AG04449 (cell line): ENCODE measurements at regions of chr4 and their contacts with region 1.

Region 1: GRCh38 chr4:40840985-40841571 is 91.3 kb downstream of the NSUN7 start:
- DNase-seq: peak; percentile 50
- H3K4me3 ChIP-seq: no peak overlapping the region
- CTCF ChIP-seq: peak; percentile 85

Region 2: GRCh38 chr4:40377582-40378550 is 463.2 kb before region 1 on chr4:
- CTCF ChIA-PET with region 1: no interaction called
- POLR2A ChIA-PET with region 1: no interaction called
- DNase-seq: no peak
- H3K4me3 ChIP-seq: no peak overlapping the region
- CTCF ChIP-seq: no peak

Region 3: GRCh38 chr4:40576631-40577480 is 264.2 kb before region 1 on chr4:
- CTCF ChIA-PET with region 1: no interaction called
- POLR2A ChIA-PET with region 1: no interaction called
- DNase-seq: no peak
- H3K4me3 ChIP-seq: no peak overlapping the region
- CTCF ChIP-seq: no peak

Region 4: DNA sequence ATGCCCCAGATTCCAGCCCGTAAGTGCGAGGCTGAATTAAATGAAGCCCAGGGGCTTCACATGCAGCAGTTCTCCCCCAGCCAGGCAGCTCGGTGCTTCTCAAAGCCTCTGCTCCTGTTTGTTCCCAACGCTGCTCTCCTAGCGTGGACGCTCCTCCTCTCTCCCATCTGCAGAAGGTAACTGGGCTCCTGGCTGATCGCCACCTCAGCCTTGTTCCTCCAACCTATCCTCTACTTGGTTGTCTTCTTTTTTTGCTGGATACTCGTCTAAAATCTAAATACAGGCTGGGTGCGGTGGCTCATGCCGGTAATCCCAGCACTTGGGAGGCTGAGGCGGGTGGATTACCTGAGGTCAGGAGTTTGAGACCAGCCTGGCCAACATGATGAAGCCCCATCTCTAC is 21.0 kb before region 1 on chr4:
- CTCF ChIA-PET with region 1: interaction called, 16 read pairs
- POLR2A ChIA-PET with region 1: no interaction called
- DNase-seq: no peak
- H3K4me3 ChIP-seq: no peak overlapping the region
- CTCF ChIP-seq: no peak

Region 5: GRCh38 chr4:40825014-40825838 is 15.9 kb before region 1 on chr4:
- CTCF ChIA-PET with region 1: interaction called, 55 read pairs
- POLR2A ChIA-PET with region 1: no interaction called
- DNase-seq: no peak
- H3K4me3 ChIP-seq: no peak overlapping the region
- CTCF ChIP-seq: no peak

Region 6: DNA sequence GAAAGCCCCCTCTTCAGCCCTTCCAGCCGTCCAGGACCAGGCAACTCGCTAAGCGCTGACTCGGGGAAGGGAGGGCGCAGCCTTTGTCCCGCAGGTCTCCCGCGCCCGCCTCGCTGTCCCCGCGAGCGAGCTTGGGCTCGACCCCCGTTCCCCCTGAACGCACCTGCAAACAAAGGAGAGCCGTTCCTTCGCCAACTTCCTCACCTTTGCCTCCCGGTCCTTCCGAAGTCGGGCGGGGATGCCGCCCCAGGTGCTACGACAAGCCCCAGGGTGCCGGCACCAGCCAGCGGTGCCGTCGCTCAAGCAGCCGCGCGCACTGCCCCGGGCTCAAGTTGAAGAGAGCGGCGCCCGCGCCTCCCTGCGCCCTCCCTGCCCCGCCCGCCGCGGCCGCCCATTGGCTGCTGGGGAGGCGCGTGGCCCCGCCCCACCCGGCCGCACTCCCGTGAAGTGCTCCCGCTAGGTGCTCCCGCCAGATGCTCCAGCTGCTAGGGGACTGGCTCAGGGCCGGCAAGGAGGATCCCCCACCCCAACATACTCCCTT is 15.8 kb after region 1 on chr4:
- CTCF ChIA-PET with region 1: interaction called, 24 read pairs
- POLR2A ChIA-PET with region 1: no interaction called
- DNase-seq: no peak
- H3K4me3 ChIP-seq: peak overlapping the region; percentile 48
- CTCF ChIP-seq: no peak

Region 7: DNA sequence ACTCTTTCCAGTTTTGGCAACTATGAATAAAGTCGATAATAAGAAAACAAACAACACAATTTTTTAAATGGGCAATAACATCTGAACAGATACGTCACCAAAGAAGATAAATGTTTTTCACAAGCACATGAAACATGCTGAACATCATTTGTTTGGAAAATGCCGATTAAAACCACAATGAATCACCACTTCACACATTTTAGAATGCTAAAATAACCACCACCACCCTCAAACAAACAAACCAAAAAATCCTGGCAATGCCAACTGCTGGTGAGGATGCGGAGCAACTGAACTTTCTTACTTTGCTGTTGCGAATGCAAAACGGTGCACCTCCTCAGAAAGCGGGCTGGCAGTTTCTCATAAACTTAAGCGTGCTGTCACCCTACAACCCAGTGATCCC is 24.6 kb after region 1 on chr4:
- CTCF ChIA-PET with region 1: interaction called, 16 read pairs
- POLR2A ChIA-PET with region 1: no interaction called
- DNase-seq: no peak
- H3K4me3 ChIP-seq: no peak overlapping the region
- CTCF ChIP-seq: no peak

Region 8: DNA sequence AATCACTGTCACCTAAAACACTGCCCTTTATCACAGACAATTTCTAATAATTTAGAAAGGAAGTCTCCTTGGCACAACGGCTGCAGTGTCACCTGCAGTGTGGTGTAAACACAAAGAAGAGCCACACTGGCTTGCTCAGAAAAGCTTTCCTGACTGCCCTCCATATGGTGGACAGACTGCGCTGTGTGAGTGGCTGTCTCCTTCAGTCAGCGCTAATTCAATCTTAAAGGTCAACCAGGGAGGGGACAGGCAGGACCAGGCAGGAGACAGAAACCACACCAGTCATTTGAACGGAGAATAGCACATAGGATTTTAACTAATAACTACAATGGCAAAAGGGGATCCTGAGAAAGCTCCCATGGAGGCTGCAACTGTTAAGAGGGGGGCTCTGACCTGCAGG is 40.8 kb after region 1 on chr4:
- CTCF ChIA-PET with region 1: interaction called, 14 read pairs
- POLR2A ChIA-PET with region 1: no interaction called
- DNase-seq: no peak
- H3K4me3 ChIP-seq: no peak overlapping the region
- CTCF ChIP-seq: no peak